RWPE1 (cell line): ENCODE measurements at regions of chr11 and their contacts with region 1.

Region 1: GRCh38 chr11:76799066-76799804 is 16.1 kb downstream of the TSKU start:
- DNase-seq: peak; percentile 85
- H3K27ac ChIP-seq: peak overlapping the region; percentile 93
- CTCF ChIP-seq: peak; percentile 93

Region 2: GRCh38 chr11:76734456-76735420 is 64.5 kb before region 1 on chr11:
- CTCF ChIA-PET with region 1: interaction called, 30 read pairs
- POLR2A ChIA-PET with region 1: no interaction called
- DNase-seq: no peak
- H3K27ac ChIP-seq: no peak overlapping the region
- CTCF ChIP-seq: no peak